ENCODE measurements at regions of chr12 and their contacts with region 1.

Region 1: DNA sequence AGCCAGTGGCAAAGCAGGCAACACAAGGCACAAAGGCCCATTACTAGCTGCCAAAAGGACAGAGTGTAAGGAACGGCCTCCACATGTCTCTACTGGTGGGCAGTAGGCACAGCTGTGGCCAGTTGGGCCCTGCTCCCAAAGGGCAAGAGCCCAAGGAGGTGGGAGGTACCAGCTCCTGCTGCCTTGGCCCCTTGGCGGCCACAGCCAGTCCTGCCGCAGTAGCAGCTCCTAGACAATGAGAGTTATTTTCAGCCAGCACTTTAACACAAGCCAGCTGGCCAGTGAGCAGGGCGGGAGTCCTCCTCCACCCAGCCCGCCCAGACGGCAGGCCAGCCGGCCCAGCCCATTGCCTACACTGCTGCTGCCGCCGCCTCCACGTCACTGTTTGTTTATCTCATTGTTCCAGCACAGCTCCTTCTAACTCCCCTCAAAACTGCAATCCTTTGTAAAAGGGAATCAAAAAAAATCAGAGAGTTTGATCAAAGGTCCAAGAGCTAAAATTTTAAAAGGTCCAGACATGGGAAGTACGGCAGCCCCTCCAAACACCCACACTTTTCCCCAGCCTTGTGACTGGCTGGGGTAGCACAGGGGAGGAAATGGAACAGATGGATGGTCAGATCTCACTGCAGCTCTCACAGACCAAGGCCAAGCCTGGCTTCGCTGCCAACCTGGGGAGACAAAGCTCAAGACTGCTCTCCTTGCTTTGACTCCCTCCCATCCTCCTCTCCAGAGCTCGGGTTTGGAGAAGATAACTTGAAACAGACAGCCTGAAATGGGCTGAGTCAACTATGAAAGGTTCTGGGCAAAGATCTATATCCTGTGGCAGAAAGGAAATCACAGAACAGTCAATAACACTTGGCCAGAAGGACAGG is 33.5 kb downstream of the FMNL3 start:
- DNase-seq: no peak
- ATAC-seq: peak; percentile 25
- H3K4me3 Mint-ChIP-seq: peak overlapping the region; percentile 41
- H3K27ac Mint-ChIP-seq: peak overlapping the region; percentile 83
- H3K4me1 Mint-ChIP-seq: peaks cover 67% of the 10 kb centered on the region
- H3K27me3 Mint-ChIP-seq: no peaks in the 10 kb centered on the region

Region 2: DNA sequence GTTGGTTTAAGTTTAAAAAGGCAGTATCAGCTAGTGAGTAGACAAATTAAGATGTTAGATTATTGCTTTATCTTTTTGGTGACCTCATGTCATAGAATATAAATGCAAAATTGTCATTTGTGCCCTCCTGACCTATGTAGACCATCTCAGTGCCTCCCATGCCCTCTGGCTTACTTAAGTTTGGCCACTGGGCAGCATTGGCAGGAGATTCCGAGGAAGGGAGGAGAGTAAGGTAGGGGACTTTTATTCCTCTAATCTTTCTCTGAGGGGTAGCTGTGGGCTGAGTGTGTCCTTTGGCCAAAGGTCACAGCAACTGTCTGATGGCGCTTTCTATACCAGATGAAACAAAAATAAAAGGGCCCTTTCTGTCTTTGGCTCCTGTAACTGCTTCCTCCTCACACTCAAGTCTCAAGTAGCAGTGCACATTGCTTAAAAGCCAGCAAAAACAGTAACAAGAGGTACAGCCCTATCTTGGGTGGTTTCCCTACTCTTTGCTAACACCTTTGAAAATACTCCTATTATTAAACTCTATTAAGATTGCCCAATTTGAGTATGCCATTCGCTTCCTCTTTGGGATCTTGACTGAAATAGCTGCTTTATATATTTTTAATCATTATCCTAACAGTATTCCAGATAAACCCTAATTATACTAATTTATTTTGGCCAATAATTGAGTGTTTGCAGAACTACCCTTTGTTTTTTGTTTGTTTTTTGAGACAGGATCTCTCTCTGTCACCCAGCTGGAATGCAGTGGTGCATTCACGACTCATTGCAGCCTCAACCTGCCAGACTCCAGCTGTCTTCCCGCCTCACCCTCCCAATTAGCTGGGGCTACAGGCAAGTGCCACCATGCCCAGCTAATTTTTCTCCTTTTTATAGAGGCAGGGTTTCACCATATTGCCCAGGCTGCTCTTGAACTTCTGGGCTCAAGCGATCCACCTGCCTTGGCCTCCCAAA is 191.3 kb before region 1 on chr12:
- POLR2A ChIA-PET with region 1: no interaction called
- DNase-seq: no peak
- ATAC-seq: no peak
- H3K4me3 Mint-ChIP-seq: no peak overlapping the region
- H3K27ac Mint-ChIP-seq: no peak overlapping the region
- H3K4me1 Mint-ChIP-seq: peaks cover 4% of the 10 kb centered on the region
- H3K27me3 Mint-ChIP-seq: peaks cover 3% of the 10 kb centered on the region

Region 3: DNA sequence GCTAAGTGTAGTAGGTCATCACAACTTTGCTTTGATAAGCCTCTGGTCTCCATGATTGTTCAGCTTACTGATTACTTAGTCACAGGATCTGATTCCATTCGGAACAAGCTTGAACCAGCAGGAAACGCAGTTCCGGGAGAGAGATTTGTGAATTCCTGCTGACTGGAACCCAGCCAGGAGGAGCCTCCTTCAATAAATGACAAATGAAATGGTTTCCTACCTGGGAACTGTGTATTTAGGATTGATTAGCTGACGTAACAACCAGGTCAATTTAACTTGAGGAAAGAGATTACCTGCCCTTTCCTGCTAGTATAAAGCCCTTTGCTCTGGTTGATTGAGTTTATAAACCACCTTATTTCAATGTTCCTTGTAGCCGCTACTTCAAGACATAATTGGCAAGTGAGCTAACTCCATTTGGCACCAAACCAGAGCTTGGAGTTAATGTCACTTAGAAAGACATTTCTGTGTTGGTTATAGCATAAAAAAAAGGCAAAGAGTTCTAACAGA is 170.0 kb before region 1 on chr12:
- POLR2A ChIA-PET with region 1: no interaction called
- DNase-seq: no peak
- ATAC-seq: no peak
- H3K4me3 Mint-ChIP-seq: no peak overlapping the region
- H3K27ac Mint-ChIP-seq: no peak overlapping the region
- H3K4me1 Mint-ChIP-seq: peaks cover 3% of the 10 kb centered on the region
- H3K27me3 Mint-ChIP-seq: no peaks in the 10 kb centered on the region

Region 4: DNA sequence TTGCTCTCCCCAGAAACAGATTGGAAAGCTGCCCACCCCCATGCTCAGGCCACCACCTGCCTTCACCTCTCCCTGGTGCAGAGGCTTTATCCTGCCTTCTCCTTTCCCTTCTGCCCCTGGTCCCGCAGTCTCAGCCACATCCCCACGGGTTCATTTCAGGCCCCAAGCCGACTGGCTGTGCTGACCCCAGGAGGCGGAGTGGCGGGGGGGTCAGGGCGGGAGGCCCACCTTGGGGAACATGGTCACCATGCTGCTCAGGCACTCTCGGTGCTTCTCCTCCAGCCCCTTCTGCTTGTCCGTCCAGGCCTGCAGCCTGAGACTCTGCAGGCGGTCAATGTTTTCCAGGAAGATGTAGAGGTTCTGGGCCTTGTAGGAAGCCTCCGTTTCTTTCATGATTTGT is 75.2 kb before region 1 on chr12:
- POLR2A ChIA-PET with region 1: no interaction called
- DNase-seq: no peak
- ATAC-seq: no peak
- H3K4me3 Mint-ChIP-seq: no peak overlapping the region
- H3K27ac Mint-ChIP-seq: no peak overlapping the region
- H3K4me1 Mint-ChIP-seq: peaks cover 1% of the 10 kb centered on the region
- H3K27me3 Mint-ChIP-seq: no peaks in the 10 kb centered on the region

Region 5: GRCh38 chr12:49662998-49663843 is 10.5 kb before region 1 on chr12:
- POLR2A ChIA-PET with region 1: interaction called, 46 read pairs
- DNase-seq: peak; percentile 65
- ATAC-seq: peak; percentile 98
- H3K4me3 Mint-ChIP-seq: peak overlapping the region; percentile 82
- H3K27ac Mint-ChIP-seq: peak overlapping the region; percentile 92
- H3K4me1 Mint-ChIP-seq: peaks cover 52% of the 10 kb centered on the region
- H3K27me3 Mint-ChIP-seq: no peaks in the 10 kb centered on the region